MCF 10A (cell line): ENCODE measurements at regions of chr5 and their contacts with region 1.

Region 1: GRCh38 chr5:61658592-61659008 is 326.5 kb downstream of the ZSWIM6 start:
- DNase-seq: peak; percentile 80
- H3K4me3 Mint-ChIP-seq: no peak overlapping the region
- H3K27ac Mint-ChIP-seq: no peak overlapping the region
- H3K4me1 Mint-ChIP-seq: no peaks in the 10 kb centered on the region
- H3K27me3 Mint-ChIP-seq: no peaks in the 10 kb centered on the region
- CTCF ChIP-seq: peak; percentile 94

Region 2: GRCh38 chr5:60960591-60960990 is 698.0 kb before region 1 on chr5:
- CTCF ChIA-PET with region 1: interaction called, 3 read pairs
- POLR2A ChIA-PET with region 1: no interaction called
- intact Hi-C with region 1: loop called (anchors 2 kb)
- DNase-seq: peak; percentile 26
- H3K4me3 Mint-ChIP-seq: no peak overlapping the region
- H3K27ac Mint-ChIP-seq: no peak overlapping the region
- H3K4me1 Mint-ChIP-seq: no peaks in the 10 kb centered on the region
- H3K27me3 Mint-ChIP-seq: no peaks in the 10 kb centered on the region
- CTCF ChIP-seq: peak; percentile 48

Region 3: GRCh38 chr5:61167382-61167781 is 491.2 kb before region 1 on chr5:
- CTCF ChIA-PET with region 1: interaction called, 6 read pairs
- POLR2A ChIA-PET with region 1: interaction called, 5 read pairs
- intact Hi-C with region 1: loop called (anchors 1 kb)
- DNase-seq: peak; percentile 54
- H3K4me3 Mint-ChIP-seq: no peak overlapping the region
- H3K27ac Mint-ChIP-seq: no peak overlapping the region
- H3K4me1 Mint-ChIP-seq: peaks cover 8% of the 10 kb centered on the region
- H3K27me3 Mint-ChIP-seq: no peaks in the 10 kb centered on the region
- CTCF ChIP-seq: peak; percentile 50

Region 4: DNA sequence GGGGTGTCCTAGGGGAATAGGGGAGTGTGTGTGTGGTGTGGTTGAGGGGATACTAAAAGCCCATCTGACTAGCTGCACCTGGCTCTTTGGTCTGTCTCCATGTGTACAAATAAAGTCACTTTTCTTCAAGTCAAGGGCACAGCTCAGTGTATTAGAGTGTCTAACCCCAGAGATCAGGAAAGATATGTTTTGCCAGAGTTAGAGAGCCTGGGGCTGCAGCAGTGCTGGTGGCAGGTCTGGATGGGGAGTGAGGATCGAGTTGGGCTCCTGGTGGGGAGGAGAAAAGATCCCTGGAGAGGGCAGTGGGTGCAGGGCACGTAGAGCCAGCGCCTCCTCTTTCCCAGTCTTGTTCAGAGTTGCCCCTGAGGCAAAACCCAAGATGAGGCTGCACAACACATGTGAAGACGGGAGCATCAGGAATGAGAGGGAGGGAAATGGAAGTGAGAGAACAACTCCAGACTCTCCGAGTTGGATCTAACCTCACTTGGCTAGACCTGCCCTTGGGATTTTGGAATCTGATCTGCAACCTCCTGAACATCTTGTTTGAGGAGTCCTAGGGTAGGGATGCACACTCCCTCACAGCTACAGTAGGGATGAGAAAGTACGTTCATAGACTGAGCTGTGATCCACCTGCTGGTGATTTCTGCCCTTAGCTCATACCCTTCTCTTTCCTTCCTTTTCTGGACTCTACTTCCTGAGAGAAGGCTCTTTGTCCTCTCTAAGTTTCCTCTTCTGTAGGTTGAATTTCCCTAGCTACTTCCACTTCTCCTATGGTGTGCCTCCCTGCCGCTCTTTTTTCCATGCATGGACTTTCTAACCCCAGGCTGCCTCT is 16.6 kb before region 1 on chr5:
- CTCF ChIA-PET with region 1: interaction called, 39 read pairs
- POLR2A ChIA-PET with region 1: interaction called, 4 read pairs
- intact Hi-C with region 1: no loop called
- DNase-seq: no peak
- H3K4me3 Mint-ChIP-seq: no peak overlapping the region
- H3K27ac Mint-ChIP-seq: no peak overlapping the region
- H3K4me1 Mint-ChIP-seq: peaks cover 5% of the 10 kb centered on the region
- H3K27me3 Mint-ChIP-seq: no peaks in the 10 kb centered on the region
- CTCF ChIP-seq: no peak

Region 5: GRCh38 chr5:61680247-61680646 is 21.6 kb after region 1 on chr5:
- CTCF ChIA-PET with region 1: interaction called, 11 read pairs
- POLR2A ChIA-PET with region 1: interaction called, 4 read pairs
- intact Hi-C with region 1: no loop called
- DNase-seq: no peak
- H3K4me3 Mint-ChIP-seq: no peak overlapping the region
- H3K27ac Mint-ChIP-seq: no peak overlapping the region
- H3K4me1 Mint-ChIP-seq: no peaks in the 10 kb centered on the region
- H3K27me3 Mint-ChIP-seq: no peaks in the 10 kb centered on the region
- CTCF ChIP-seq: no peak

Region 6: DNA sequence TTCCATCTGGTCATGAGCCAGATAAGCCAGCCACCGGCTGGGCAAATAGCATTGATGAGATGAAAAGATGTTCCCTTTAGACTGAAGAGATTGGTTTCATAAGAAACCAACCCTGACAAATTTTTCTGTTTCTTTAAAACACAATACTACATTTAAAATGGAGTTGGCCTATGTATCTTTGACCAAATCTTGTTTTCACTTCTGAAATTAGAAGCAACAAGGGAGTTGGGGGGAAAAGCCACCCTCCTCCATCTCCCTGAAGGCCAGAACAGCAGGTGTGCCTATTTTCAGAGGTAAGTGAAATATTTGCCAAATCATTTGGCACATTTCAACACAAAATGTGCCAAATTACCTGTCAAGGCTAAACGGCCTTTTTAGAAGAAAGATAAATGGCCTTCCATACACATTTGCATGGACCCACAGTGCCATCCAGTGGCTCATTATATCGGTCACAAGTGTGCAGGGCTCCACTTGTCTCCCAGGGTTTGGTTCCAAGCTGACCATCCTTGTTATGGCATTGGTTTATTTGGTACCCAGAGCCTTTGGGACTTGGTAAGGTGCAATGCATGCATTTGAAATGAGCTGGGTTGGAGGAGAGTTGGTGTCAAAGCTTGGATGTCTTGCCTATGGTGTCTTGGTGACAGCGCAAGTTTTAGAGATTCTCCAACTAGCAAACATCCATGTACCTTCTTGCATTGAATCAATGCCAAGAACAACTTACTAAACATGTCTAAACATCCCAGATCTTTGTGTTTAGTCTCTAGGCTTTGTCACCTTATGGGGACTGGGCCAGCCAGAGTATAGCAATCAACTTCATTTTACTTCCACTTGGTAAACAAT is 275.4 kb after region 1 on chr5:
- CTCF ChIA-PET with region 1: interaction called, 4 read pairs
- POLR2A ChIA-PET with region 1: no interaction called
- intact Hi-C with region 1: loop called (anchors 1 kb)
- DNase-seq: peak; percentile 88
- H3K4me3 Mint-ChIP-seq: no peak overlapping the region
- H3K27ac Mint-ChIP-seq: no peak overlapping the region
- H3K4me1 Mint-ChIP-seq: peaks cover 19% of the 10 kb centered on the region
- H3K27me3 Mint-ChIP-seq: no peaks in the 10 kb centered on the region
- CTCF ChIP-seq: peak; percentile 78